ENCODE measurements at regions of chr18 and their contacts with region 1.

Region 1: GRCh38 chr18:62637807-62638687 is 77.3 kb upstream of the PHLPP1 start:
- DNase-seq: peak; percentile 57
- H3K4me3 ChIP-seq: no peak overlapping the region
- H3K27ac ChIP-seq: no peak overlapping the region
- H3K4me1 ChIP-seq: no peaks in the 10 kb centered on the region
- H3K27me3 ChIP-seq: no peaks in the 10 kb centered on the region
- CTCF ChIP-seq: peak; percentile 77

Region 2: GRCh38 chr18:62957885-62958472 is 319.9 kb after region 1 on chr18:
- CTCF ChIA-PET with region 1: no interaction called
- POLR2A ChIA-PET with region 1: no interaction called
- intact Hi-C with region 1: loop called (anchors 5 kb)
- DNase-seq: peak; percentile 54
- H3K4me3 ChIP-seq: no peak overlapping the region
- H3K27ac ChIP-seq: no peak overlapping the region
- H3K4me1 ChIP-seq: no peaks in the 10 kb centered on the region
- H3K27me3 ChIP-seq: no peaks in the 10 kb centered on the region
- CTCF ChIP-seq: peak; percentile 58

Region 3: DNA sequence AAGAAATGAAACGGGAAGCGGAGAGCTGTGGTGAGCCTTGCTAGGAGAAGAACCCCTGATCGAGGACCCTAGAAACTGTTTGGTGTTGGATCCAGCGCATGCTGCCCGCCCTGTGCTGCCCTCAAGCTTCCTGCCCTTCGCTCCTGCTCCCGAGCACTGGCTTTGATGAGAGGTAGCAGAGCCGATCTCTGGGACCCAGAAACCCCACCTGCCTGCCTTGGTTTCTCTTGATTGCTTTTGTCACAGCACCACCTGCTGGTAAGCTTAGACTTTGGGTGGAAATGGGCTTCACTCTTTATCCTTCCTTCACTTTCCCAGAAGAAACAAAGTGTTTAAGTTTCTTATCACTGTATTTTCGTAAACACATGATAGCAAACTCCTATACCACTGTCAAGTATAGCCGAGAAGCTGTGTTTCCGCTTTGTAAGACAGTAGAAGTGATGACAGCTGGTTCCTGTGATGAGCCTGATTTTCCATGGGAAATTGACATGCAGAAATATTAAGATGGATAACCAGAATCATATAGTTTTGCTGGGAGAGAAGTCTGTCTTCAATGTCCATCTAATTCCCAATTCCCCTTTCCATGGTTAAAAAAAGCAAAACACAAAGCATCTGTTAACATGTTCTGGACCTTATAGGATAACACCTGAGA is 344.7 kb after region 1 on chr18:
- CTCF ChIA-PET with region 1: no interaction called
- POLR2A ChIA-PET with region 1: no interaction called
- intact Hi-C with region 1: loop called (anchors 1 kb)
- DNase-seq: peak; percentile 62
- H3K4me3 ChIP-seq: no peak overlapping the region
- H3K27ac ChIP-seq: no peak overlapping the region
- H3K4me1 ChIP-seq: no peaks in the 10 kb centered on the region
- H3K27me3 ChIP-seq: no peaks in the 10 kb centered on the region
- CTCF ChIP-seq: peak; percentile 85